Activated CD4-positive, alpha-beta T cell treated with anti-CD3 and anti-CD28 coated beads, Interleukin-2, amount 10 ng/mL, durations not matched to agents 24 days and 14 days (primary cell): ENCODE measurements at regions of chr9 and their contacts with region 1.

Region 1: DNA sequence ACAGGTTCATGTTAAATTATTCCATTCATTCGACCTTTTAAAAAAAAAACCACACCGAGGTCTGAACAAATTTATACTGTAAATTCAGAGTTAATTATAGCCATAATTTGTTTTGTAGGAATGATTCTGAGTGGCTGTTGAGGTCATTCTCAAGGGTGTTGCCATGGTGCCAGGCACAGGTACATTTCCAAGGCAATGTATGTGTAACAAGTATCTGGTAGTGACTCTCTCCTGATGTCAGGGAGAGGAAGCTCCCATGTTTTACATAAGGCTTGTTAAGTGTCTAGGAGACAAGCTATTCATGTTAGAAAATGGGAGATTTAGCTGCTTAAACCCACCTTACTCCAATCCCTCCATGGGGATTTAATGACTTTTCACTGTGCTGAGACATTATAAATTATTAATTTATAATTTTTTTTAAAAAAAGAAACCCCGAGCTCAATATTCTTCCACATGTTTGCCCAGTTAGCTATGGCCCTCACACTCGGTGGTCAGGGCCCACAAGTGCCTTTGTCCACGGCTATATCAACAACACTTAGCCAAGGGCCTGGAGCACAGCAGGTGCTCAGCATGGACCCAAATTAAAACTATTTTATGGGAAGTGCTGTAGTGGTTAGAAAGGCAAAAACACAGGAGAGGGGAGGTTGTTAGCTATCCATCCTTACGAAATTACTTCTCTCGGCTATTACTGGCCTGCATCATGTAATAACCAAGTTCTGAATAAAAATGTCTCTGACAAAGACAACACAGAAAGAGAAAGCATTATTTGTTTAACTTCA is 154.6 kb upstream of the GNA14 start:
- DNase-seq: no peak
- H3K4me3 Mint-ChIP-seq: no peak overlapping the region
- H3K27ac Mint-ChIP-seq: no peak overlapping the region
- H3K4me1 Mint-ChIP-seq: peaks cover 25% of the 10 kb centered on the region
- H3K27me3 Mint-ChIP-seq: no peaks in the 10 kb centered on the region

Region 2: DNA sequence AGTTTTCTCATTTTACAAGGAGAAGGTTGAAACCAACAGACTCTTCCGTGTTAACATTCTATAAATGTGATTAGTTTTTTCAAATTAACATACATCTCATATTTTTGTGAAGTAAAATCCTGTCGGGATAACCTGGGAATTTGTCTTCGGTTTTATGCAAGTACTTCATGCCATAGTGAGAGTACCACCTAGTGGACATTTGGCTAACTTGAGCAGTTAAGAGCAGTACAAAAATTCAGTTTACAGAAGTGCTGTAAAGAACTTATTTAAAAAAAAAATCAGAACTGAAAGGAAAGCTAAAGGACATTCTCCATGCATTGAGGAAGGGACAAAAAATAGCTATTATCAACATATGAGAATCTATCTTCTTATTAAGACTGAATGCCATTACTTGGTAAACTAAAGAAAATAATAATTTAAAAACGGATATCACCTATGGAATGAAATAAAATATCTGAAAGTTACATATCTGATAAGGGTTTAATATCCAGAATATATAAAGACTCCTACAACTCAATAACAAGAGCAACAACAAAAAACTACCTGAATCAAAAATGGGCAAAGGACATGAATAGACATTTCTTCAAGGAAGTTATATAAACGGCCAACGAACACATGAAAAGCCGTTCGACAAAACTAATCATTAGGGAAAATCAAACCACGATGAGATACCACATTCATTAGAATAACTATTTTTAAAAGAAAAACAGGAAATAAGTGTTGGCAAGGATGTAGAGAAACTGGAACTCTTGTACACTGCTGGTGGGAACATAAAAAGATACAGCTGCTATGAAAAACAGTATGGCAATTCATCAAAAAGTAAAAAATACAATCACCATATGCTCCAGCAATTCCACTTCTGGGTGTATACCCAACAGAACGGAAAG is 37.6 kb before region 1 on chr9:
- intact Hi-C with region 1: loop called (anchors 5 kb)
- DNase-seq: no peak
- H3K4me3 Mint-ChIP-seq: no peak overlapping the region
- H3K27ac Mint-ChIP-seq: no peak overlapping the region
- H3K4me1 Mint-ChIP-seq: no peaks in the 10 kb centered on the region
- H3K27me3 Mint-ChIP-seq: no peaks in the 10 kb centered on the region

Region 3: DNA sequence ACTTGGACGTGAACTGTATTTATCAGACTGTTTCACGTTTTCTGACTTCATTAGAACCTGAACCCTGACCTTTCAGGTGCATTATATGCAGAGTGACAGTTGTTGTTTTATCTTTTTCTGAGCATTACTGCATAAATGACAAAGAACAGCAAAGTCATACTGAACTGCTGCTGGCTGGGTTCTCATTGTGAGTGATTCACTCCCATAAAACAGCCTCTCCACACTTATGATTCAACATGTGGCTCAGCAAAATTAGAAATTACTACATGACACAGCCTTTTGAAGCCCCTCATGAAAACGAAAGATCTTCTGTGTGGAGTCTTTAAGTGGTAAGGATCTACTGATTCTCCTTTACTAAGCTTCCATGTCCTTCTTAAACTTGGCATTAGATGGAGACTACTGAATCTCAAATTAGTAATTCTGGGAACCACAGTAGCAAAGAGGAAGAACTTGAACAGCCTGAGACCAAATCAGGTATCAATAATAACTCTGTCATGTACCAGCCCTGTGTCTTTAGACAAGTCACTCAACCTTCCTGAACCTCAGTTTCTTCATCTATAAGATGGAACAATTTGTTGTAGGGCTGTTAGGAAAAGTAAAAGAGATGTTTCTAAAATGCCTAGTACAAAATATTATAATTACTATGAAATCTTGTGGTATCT is 17.7 kb after region 1 on chr9:
- intact Hi-C with region 1: loop called (anchors 1 kb)
- DNase-seq: no peak
- H3K4me3 Mint-ChIP-seq: no peak overlapping the region
- H3K27ac Mint-ChIP-seq: peak overlapping the region; percentile 64
- H3K4me1 Mint-ChIP-seq: peaks cover 19% of the 10 kb centered on the region
- H3K27me3 Mint-ChIP-seq: no peaks in the 10 kb centered on the region